HEK293T (cell line): ENCODE measurements at regions of chr4 and their contacts with region 1.

Region 1: DNA sequence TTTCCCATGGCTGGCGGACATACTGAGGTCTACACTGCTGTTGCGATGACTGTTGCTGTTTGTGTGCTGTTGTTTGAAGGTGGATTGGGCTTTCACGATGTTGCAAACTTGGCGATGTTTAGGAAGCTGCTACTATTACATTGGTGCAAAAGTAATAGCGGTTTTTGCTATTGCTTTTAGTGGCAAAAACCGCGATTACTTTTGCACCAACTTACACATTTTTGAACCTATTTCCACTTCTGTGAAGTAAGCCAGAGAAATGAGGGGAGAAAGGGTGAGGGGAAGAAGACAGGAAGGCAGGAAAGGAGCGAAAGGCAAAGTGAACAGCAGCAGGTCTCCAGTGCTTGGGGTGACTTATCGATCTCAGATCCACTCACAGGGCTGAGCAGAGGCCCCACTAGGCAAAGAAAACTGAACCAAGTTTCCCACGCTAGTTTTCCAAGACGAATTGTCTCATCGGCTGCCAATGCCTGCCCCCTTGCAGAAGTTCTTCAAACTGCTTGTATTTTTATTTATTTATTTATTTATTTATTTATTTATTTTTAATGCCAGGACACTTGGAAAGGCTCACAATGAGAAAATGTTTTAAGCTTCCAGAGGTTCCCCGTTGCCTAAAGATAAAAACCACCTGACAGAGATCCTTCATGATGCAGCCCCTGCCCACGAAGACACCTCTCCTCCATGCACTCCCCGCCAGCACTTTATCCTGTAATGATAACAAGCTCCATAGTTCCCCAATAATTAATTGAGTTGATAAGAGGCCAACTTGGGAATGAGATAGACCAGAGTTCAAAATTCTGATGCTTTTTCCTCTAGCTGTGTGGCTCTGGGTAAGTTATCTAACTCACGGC is 43.3 kb downstream of the QDPR start:
- DNase-seq: peak; percentile 53

Region 2: DNA sequence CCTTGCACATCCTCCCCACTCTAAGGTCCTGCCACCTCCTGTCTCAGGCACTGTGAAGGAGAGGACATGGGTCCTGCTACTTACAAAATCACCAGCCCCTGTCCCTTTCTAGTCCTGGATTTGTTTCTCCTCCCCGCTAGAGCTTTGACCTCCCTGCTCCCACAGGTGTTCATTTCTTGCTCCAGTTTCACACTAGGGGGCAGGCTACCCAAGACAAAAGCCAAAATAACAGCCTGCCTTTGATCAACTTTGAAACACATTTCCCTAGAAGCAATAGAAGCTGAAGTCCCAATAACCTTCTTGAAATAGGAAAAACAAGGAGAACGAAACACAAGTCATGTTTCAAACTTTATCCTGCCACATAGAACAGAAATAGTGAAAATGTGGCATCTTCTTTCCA is 121.2 kb before region 1 on chr4:
- CTCF ChIA-PET with region 1: interaction called, 11 read pairs
- POLR2A ChIA-PET with region 1: no interaction called
- DNase-seq: peak; percentile 47

Region 3: DNA sequence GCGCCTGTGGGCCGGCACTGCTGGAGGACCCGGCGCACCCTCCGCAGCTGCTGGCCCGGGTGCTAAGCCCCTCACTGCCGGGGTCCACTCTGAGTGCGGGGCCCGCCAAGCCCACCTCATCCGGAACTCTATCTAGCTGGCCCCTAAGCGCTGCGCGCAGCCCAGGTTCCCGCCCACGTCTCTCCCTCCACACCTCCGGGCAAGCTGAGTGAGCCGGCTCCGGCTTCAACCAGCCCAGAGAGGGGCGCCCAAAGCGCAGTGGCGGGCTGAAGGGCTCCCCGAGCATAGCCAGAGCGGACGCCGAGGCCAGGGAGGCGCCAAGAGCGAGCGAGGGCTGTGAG is 31.9 kb before region 1 on chr4:
- CTCF ChIA-PET with region 1: no interaction called
- POLR2A ChIA-PET with region 1: no interaction called
- DNase-seq: no peak

Region 4: DNA sequence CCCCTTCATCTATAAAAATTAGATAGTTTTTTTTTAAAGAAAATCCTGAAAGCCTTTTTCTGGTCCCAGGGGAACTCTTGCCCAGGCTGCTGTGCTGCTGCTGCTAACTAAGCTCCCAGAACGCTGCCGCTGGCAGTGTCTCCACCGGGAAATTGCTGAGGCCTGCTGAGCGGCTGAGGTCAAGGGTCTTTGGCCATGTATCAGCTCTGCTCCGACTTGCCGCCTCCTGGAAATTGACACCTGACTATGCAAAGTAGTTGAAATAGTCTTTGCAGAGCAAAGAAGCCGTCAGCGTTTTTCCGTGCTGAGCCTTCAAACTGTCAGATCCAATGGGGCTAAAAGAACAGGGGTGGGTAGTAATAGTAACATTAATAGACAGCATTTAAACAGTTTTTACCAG is 42.5 kb after region 1 on chr4:
- CTCF ChIA-PET with region 1: no interaction called
- POLR2A ChIA-PET with region 1: no interaction called
- DNase-seq: no peak

Region 5: DNA sequence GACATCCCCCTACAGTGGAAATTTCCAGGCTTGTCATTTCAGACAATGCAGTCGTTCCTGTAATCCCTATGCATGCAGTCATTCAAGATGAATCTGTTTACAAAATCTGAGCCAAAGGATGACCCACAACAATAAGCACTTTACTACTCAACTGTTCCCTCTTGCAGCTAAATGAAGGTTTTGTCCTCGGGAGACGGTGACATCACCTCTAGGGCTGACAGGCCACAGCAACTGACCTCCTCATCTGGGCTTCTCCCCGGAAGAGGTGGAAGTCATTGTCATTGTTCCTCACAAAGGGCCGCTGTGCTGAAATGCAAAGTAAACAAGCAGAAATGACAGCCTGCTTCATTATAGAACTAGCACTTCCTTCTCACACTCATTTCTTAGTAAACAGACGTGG is 75.6 kb after region 1 on chr4:
- CTCF ChIA-PET with region 1: interaction called, 10 read pairs
- POLR2A ChIA-PET with region 1: no interaction called
- DNase-seq: no peak